Heart left ventricle (tissue), 16 donors: ENCODE measurements at regions of chr7 and their contacts with region 1.

Region 1: GRCh38 chr7:120160166-120160565 is 112.8 kb upstream of the KCND2 start:
- DNase-seq: no peak
- ATAC-seq: no peak
- H3K4me3 ChIP-seq: no peak overlapping the region
- H3K27ac ChIP-seq: no peak overlapping the region
- H3K4me1 ChIP-seq: no peaks in the 10 kb centered on the region
- H3K27me3 ChIP-seq: no peaks in the 10 kb centered on the region
- CTCF ChIP-seq: no peak
- POLR2A ChIP-seq: no peak

Region 2: DNA sequence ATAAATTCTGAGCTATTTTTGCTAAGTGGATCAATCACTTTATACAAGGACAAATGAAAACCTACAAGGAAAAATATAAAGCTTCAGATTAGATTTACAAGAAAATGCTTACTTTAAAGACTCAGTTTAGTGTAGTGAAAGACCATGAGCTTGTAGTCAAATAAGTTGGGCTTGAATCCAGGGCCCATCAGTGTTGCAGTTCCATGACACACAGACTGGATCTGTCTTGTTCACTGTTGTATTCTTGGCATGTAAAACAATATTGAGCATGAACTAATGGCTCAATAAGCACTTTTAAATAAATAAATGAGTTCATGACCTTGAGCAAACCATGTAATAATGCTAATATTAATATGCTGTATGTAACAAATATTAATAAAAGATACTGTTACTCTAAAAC is 51.8 kb before region 1 on chr7:
- intact Hi-C with region 1: loop called in 1 of 10 experiments (anchors 5 kb)
- DNase-seq: no peak
- ATAC-seq: no peak
- H3K4me3 ChIP-seq: no peak overlapping the region
- H3K27ac ChIP-seq: no peak overlapping the region
- H3K4me1 ChIP-seq: no peaks in the 10 kb centered on the region
- H3K27me3 ChIP-seq: no peaks in the 10 kb centered on the region
- CTCF ChIP-seq: no peak
- POLR2A ChIP-seq: no peak

Region 3: GRCh38 chr7:120229084-120229483 is 68.9 kb after region 1 on chr7:
- intact Hi-C with region 1: no loop called
- DNase-seq: no peak
- ATAC-seq: no peak
- H3K4me3 ChIP-seq: no peak overlapping the region
- H3K27ac ChIP-seq: no peak overlapping the region
- H3K4me1 ChIP-seq: no peaks in the 10 kb centered on the region
- H3K27me3 ChIP-seq: no peaks in the 10 kb centered on the region
- CTCF ChIP-seq: no peak
- POLR2A ChIP-seq: no peak

Region 4: DNA sequence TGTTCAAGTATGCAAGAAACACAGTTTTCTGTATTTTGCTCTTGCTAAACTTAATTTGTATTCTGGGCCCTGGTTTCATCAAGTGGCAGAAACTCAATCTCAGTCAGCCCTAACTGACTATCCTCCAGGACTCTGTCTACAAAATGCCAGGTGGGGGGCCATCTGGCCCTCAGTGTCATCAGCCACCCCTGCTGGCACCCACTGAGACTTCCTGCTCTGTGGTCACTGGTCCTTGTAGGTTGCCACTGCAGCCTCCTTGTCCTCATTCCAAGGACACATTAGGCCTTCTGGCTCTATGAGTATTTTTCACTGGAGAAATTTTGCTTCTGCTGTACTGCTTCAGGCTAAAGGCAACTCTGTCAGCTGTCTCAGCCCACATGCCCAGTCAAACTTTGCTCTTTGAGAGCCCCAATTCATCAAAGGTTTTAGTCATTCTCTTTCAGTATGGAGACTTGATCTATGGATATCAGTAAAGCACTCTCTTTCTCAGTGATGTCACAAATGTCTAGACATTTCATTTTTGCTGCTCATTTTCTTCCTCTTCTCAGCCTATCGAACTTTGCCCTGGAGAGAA is 276.4 kb after region 1 on chr7:
- intact Hi-C with region 1: no loop called
- DNase-seq: no peak
- ATAC-seq: no peak
- H3K4me3 ChIP-seq: no peak overlapping the region
- H3K27ac ChIP-seq: no peak overlapping the region
- H3K4me1 ChIP-seq: no peaks in the 10 kb centered on the region
- H3K27me3 ChIP-seq: no peaks in the 10 kb centered on the region
- CTCF ChIP-seq: no peak
- POLR2A ChIP-seq: no peak